CD4-positive, alpha-beta T cell (primary cell): ENCODE measurements at regions of chr3 and their contacts with region 1.

Region 1: DNA sequence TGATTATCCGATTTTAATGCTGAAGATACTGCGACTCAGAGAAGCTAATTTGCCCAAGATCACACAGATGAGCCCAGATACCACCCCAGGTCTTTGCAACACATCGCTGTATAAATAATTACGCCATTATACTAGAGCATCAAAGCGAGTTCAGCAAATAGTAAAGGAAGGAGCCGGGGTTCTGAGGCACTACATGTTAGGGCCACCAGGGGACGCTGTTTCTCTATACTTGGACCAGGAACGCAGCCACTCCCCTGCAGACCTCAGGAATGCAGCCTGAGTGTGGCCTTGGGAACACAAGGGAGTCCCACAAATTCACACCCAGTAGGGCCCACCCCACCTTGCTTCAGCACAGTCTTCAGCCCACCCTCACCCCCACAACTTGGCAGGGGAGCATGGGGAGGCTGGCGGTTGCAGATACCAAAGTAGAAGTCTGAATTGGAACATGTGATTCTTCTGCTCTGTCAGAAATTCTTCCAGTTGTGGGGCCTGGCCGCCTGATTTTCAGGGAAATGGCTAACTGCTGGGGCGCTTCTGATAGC is 57.8 kb upstream of the RYK start:
- DNase-seq: peak; percentile 53 to 86 (median 71)
- ATAC-seq: peak; percentile 96
- H3K4me3 ChIP-seq: no peak overlapping the region
- H3K4me3 Mint-ChIP-seq: no peak overlapping the region
- H3K27ac ChIP-seq: no peak overlapping the region
- H3K27ac Mint-ChIP-seq: no peak overlapping the region
- H3K4me1 ChIP-seq: peaks cover 14% of the 10 kb centered on the region
- H3K4me1 Mint-ChIP-seq: peaks cover 5% of the 10 kb centered on the region
- H3K27me3 ChIP-seq: peaks cover 8 to 12% of the 10 kb centered on the region in 2 experiments
- H3K27me3 Mint-ChIP-seq: peaks cover 35% of the 10 kb centered on the region
- CTCF ChIP-seq: peak; percentile 98

Region 2: DNA sequence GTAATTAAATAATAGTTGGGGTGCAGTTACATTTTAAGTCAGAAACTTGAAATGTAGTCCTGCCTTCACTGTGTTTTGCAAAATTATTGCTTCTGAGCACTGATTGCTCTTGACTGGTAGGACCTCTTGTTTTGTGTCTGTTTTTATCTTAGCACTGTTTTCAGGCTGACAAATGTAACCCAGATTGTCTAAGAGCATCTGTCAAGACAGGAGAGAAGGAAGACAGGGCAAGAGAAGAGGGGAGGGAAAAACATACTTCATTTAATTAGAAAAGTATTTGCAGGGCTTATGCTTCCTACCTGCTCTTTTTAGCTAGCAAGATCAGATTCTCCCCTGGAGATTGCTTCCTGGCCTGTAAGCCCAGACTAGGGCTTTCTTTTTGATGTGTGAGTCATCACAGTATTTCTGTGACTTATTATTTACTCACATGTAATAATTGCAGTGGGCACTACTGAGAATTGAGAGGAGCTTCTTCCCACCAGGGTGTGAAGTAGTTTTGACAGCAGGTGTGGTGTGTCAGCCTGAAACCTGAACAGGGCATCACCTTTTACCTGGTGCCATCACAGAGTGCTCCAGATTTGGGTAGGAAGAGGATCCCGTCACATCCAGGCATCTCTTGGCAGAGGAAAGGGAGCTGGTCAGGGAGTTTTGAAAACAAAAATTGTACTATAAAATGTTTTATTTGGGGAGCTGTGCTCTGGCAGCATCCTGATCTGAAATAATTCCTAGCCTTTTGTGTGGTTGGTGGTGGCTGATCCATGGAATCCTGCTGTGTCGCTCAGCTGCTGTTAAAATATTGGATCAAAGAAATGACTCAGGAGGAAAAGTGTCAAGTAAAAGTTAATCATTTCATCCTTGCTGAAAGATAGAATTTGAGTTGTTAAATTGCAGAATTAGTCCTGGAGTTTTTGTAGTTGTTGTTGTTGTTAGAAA is 1172.0 kb before region 1 on chr3:
- CTCF ChIA-PET with region 1: no interaction called
- POLR2A ChIA-PET with region 1: no interaction called
- intact Hi-C with region 1: no loop called
- DNase-seq: no peak
- ATAC-seq: no peak
- H3K4me3 ChIP-seq: no peak overlapping the region
- H3K4me3 Mint-ChIP-seq: no peak overlapping the region
- H3K27ac ChIP-seq: no peak overlapping the region
- H3K27ac Mint-ChIP-seq: no peak overlapping the region
- H3K4me1 ChIP-seq: no peaks in the 10 kb centered on the region
- H3K4me1 Mint-ChIP-seq: no peaks in the 10 kb centered on the region
- H3K27me3 ChIP-seq: no peaks in the 10 kb centered on the region
- H3K27me3 Mint-ChIP-seq: peaks cover 11% of the 10 kb centered on the region
- CTCF ChIP-seq: no peak

Region 3: GRCh38 chr3:133464573-133464972 is 843.8 kb before region 1 on chr3:
- CTCF ChIA-PET with region 1: no interaction called
- POLR2A ChIA-PET with region 1: no interaction called
- intact Hi-C with region 1: no loop called
- DNase-seq: no peak
- ATAC-seq: no peak
- H3K4me3 ChIP-seq: no peak overlapping the region
- H3K4me3 Mint-ChIP-seq: no peak overlapping the region
- H3K27ac ChIP-seq: no peak overlapping the region
- H3K27ac Mint-ChIP-seq: no peak overlapping the region
- H3K4me1 ChIP-seq: peaks cover 25% of the 10 kb centered on the region
- H3K4me1 Mint-ChIP-seq: peaks cover 66% of the 10 kb centered on the region
- H3K27me3 ChIP-seq: no peaks in the 10 kb centered on the region
- H3K27me3 Mint-ChIP-seq: no peaks in the 10 kb centered on the region
- CTCF ChIP-seq: no peak

Region 4: GRCh38 chr3:134197681-134198261 is 110.7 kb before region 1 on chr3:
- CTCF ChIA-PET with region 1: no interaction called
- POLR2A ChIA-PET with region 1: no interaction called
- intact Hi-C with region 1: loop called in 1 of 2 experiments (anchors 5 kb)
- DNase-seq: peak in 3 of 14 experiments; percentile 53 to 64 (median 63)
- ATAC-seq: peak; percentile 77
- H3K4me3 ChIP-seq: no peak overlapping the region
- H3K4me3 Mint-ChIP-seq: no peak overlapping the region
- H3K27ac ChIP-seq: no peak overlapping the region
- H3K27ac Mint-ChIP-seq: no peak overlapping the region
- H3K4me1 ChIP-seq: no peaks in the 10 kb centered on the region
- H3K4me1 Mint-ChIP-seq: peaks cover 6% of the 10 kb centered on the region
- H3K27me3 ChIP-seq: no peaks in the 10 kb centered on the region
- H3K27me3 Mint-ChIP-seq: no peaks in the 10 kb centered on the region
- CTCF ChIP-seq: peak; percentile 78

Region 5: DNA sequence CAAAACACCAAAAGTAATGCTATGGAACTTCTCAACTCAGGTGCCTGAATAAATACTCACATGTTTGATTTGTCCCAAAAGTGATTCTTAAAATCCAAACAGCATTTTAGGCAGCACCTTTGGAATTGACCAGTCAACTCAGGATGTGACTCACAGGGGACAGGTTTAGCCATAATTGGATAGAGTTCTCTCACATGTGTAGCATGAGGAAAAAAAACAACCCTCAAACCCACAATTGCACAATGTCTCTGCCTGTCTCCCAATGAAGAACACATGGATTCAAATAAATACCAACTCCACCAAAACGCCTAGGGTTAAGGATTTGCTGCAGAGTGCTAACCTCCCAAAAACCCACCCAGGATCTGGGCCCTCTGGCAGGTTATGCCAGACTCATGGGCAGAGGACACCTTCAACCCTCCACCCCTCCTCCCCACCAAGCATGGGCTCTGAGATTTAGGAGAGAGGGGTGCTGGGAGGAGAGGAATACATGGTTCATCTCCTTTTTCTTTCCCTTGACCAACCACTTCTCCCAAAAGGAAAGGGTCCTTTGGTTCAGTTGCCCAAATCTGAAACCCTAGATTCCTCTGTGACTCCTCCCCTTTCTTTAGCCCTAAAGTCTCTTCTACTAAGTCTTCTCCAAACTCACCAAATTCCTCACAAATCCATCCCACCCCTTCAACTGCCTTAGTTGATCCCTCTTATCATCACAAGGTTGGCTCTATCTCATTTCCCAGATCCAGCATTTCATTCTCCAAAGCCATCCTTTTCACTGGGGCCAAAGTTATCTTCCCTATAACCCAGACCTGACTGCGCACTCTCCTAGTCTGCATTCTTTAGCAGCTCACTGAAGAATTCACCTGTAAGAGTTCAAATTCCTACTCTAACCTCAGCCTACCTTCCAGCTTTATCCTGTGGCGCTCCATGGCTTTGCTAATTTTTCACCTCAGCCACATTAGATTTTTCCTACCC is 65.5 kb before region 1 on chr3:
- CTCF ChIA-PET with region 1: no interaction called
- POLR2A ChIA-PET with region 1: no interaction called
- intact Hi-C with region 1: no loop called
- DNase-seq: no peak
- ATAC-seq: no peak
- H3K4me3 ChIP-seq: no peak overlapping the region
- H3K4me3 Mint-ChIP-seq: peak overlapping the region; percentile 12
- H3K27ac ChIP-seq: no peak overlapping the region
- H3K27ac Mint-ChIP-seq: no peak overlapping the region
- H3K4me1 ChIP-seq: peaks cover 23% of the 10 kb centered on the region
- H3K4me1 Mint-ChIP-seq: peaks cover 85% of the 10 kb centered on the region
- H3K27me3 ChIP-seq: no peaks in the 10 kb centered on the region
- H3K27me3 Mint-ChIP-seq: no peaks in the 10 kb centered on the region
- CTCF ChIP-seq: no peak

Region 6: DNA sequence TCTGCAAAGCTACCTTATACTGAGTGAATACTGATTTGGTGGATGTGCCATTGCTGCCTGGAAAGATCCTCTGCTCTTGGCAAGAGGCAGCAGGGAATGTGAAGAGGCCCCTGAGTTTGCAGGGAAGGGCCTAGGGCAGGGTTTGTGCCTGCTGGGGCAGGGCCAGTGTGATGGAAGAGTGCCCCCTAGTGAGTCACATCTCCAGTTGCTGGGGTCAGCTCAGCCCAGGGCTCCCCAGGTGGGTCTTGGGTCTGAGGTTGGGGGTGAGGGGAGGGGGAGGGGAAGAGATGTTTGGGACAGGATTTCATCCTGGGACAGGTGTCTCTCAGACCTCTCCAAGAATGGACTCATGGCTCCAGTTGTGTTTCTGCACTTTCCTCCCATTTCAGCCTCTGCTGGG is 70.0 kb after region 1 on chr3:
- CTCF ChIA-PET with region 1: interaction called, 3 read pairs
- POLR2A ChIA-PET with region 1: no interaction called
- intact Hi-C with region 1: loop called (anchors 1 kb)
- DNase-seq: peak in 7 of 14 experiments; percentile 10 to 65 (median 49)
- ATAC-seq: no peak
- H3K4me3 ChIP-seq: no peak overlapping the region
- H3K4me3 Mint-ChIP-seq: no peak overlapping the region
- H3K27ac ChIP-seq: no peak overlapping the region
- H3K27ac Mint-ChIP-seq: no peak overlapping the region
- H3K4me1 ChIP-seq: peaks cover 15% of the 10 kb centered on the region
- H3K4me1 Mint-ChIP-seq: peaks cover 12% of the 10 kb centered on the region
- H3K27me3 ChIP-seq: peaks cover 18 to 23% of the 10 kb centered on the region in 2 experiments
- H3K27me3 Mint-ChIP-seq: peaks cover 43% of the 10 kb centered on the region
- CTCF ChIP-seq: no peak

Region 7: DNA sequence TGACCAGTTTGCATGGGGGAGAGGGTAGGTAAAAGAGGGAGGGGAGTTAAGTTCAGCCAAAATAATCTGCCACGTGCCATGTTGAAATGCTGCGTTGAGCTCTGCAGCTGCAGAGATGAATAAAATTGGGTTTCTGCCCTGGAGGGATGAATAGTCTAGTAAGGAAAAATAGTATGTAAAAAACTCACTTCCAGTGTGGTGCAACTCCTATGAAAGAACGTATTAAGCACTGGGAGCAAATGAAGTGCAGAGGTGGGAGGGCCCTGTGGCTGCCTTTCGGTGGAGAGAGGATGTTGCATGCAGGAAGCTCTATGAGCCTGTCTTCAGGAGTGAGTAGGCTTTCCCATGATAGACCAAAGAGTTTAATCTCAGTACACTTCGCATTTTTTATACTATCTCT is 186.1 kb after region 1 on chr3:
- CTCF ChIA-PET with region 1: interaction called, 4 read pairs
- POLR2A ChIA-PET with region 1: no interaction called
- intact Hi-C with region 1: loop called (anchors 1 to 5 kb)
- DNase-seq: no peak
- ATAC-seq: no peak
- H3K4me3 ChIP-seq: no peak overlapping the region
- H3K4me3 Mint-ChIP-seq: no peak overlapping the region
- H3K27ac ChIP-seq: no peak overlapping the region
- H3K27ac Mint-ChIP-seq: no peak overlapping the region
- H3K4me1 ChIP-seq: no peaks in the 10 kb centered on the region
- H3K4me1 Mint-ChIP-seq: peaks cover 80% of the 10 kb centered on the region
- H3K27me3 ChIP-seq: no peaks in the 10 kb centered on the region
- H3K27me3 Mint-ChIP-seq: no peaks in the 10 kb centered on the region
- CTCF ChIP-seq: no peak